ENCODE measurements at regions of chr3 and their contacts with region 1.

Region 1: DNA sequence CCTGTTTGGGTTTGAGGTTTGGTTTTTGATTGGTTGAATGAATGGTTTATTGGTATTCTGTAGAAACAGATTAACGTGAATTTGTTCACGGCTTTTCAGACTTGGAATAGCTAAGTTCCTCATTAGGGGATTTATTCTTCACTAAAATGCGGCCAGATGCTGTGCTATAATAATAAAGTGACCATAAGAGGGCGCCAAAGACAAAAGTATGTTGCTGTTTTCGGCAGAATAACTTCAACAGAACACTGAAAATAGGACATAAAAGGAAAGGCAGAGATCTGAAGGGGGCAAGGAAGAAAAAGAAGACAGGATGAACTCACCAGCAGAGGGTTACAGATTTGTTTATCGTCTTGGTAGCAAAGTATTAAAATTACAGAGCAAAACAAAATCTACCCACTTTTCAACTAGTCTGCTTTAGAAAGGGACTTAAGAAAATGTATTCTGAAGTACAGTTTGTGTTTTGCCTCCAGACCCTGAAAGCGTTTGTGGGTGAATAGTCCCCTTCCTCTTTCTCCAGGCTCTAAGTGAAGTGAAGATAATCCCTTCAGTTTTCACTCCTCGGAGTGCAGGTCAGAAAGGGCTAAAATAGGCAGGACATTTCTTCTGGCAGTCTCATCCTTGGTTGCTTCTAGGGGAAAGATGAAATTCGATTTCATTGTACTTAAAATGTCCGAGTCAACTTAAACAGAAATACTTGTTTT is 147.6 kb downstream of the IL20RB start:
- DNase-seq: no peak
- ATAC-seq: no peak

Region 2: DNA sequence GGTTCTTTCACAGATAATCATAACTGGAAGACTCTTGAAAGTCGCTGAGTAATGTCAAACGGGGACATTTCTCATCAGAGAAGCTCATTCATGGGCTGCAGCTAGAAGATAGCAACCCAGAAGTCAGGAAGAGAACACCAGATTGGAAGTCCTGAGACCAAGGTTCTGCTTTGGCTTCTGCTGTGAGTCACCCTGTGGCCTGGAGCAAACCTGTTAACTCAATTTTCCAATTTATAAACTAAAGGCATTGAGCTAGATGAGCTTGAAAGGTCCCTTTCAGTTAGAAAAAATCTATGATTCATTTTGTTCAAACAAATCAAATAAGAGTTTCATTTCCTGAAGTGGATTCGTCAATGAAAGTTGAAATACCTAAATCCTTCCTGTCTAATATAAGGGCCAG is 1908.2 kb before region 1 on chr3:
- intact Hi-C with region 1: no loop called
- DNase-seq: no peak
- ATAC-seq: no peak

Region 3: DNA sequence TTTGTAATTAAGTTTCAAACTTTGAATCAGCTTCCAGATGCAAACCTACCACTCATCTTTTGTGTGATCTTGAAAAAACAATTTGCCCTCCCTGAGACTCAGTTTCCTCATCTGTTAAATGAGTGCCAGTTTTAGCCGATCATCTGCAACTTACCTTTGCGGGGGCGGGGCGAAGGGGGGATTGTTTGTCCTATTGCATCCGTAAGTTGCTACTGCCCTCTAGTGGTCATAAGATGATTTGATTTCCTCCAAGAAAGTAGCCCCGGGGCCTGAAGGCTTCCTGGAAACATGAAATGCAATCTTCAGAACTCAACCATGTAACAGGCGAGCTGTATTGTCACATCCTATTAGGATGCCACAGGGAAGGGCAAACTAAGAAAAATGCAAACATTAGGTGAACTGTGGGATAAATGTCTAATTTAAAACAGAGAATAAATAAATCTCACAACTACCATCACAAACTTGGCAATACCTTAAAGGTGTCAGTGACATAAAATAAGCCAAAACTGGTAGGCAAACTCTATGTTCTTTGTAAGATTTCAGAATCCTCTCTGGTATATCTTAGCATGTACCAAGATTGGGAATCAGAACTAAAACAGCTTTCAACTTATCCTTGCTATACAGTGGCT is 841.0 kb after region 1 on chr3:
- intact Hi-C with region 1: loop called in 1 of 2 experiments (anchors 5 kb)
- DNase-seq: peak; percentile 26 to 57
- ATAC-seq: peak; percentile 49

Region 4: GRCh38 chr3:137988152-137988551 is 882.7 kb after region 1 on chr3:
- intact Hi-C with region 1: no loop called
- DNase-seq: peak in 1 of 2 donors; percentile 30
- ATAC-seq: peak; percentile 93

Measured in left colon (tissue), 2 donors.